ENCODE measurements at regions of chr11 and their contacts with region 1.

Region 1: GRCh38 chr11:110077831-110078325 is 15.3 kb upstream of the ZC3H12C start:
- DNase-seq: peak; percentile 86
- ATAC-seq: peak; percentile 88
- H3K4me3 ChIP-seq: no peak overlapping the region
- H3K27ac ChIP-seq: peak overlapping the region; percentile 51
- H3K4me1 ChIP-seq: peaks cover 16% of the 10 kb centered on the region
- H3K27me3 ChIP-seq: no peaks in the 10 kb centered on the region
- CTCF ChIP-seq: no peak
- EP300 ChIP-seq: peak; percentile 84 to 91
- POLR2A ChIP-seq: no peak
- RAD21 ChIP-seq: no peak; the same call in 1 of the 2 replicates

Region 2: DNA sequence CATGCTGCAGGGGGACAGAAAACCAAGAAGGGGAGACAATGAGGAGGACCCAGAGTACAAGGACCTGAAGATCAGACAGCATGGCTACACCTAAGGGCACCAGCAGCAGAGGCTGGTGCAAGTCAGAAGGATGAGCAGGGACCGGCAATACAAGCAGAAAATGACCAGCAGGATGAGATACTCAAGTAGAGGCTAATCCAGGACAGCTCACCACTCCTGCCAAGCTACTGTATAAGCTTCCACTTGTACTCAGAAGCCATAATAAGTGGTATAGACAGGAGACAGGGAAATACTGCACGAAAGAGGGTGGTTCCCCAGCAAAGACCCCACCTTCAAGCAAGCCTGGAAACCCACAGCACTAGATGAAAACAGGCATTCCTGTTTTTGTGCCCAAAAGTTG is 123.3 kb before region 1 on chr11:
- CTCF ChIA-PET with region 1: interaction called, 10 read pairs
- POLR2A ChIA-PET with region 1: interaction called, 3 read pairs
- RAD21 ChIA-PET with region 1: interaction called, 16 read pairs
- SMC1A ChIA-PET with region 1: interaction called, 14 read pairs
- in situ Hi-C with region 1: loop called (anchors 5 kb)
- intact Hi-C with region 1: loop called (anchors 5 kb)
- DNase-seq: no peak
- ATAC-seq: no peak
- H3K4me3 ChIP-seq: no peak overlapping the region
- H3K27ac ChIP-seq: no peak overlapping the region
- H3K4me1 ChIP-seq: peaks cover 34% of the 10 kb centered on the region
- H3K27me3 ChIP-seq: no peaks in the 10 kb centered on the region
- CTCF ChIP-seq: no peak
- EP300 ChIP-seq: no peak
- POLR2A ChIP-seq: no peak
- RAD21 ChIP-seq: no peak

Region 3: GRCh38 chr11:109984634-109985289 is 93.1 kb before region 1 on chr11:
- CTCF ChIA-PET with region 1: interaction called, 3 read pairs
- POLR2A ChIA-PET with region 1: interaction called, 5 read pairs
- RAD21 ChIA-PET with region 1: interaction called, 3 read pairs
- SMC1A ChIA-PET with region 1: interaction called, 12 read pairs
- in situ Hi-C with region 1: no loop called
- intact Hi-C with region 1: no loop called
- DNase-seq: peak; percentile 67
- ATAC-seq: peak; percentile 94
- H3K4me3 ChIP-seq: peak overlapping the region; percentile 30
- H3K27ac ChIP-seq: peak overlapping the region; percentile 89
- H3K4me1 ChIP-seq: peaks cover 19% of the 10 kb centered on the region
- H3K27me3 ChIP-seq: no peaks in the 10 kb centered on the region; a peak in 1 of 4 replicates
- CTCF ChIP-seq: no peak
- EP300 ChIP-seq: peak; percentile 94 to 95
- POLR2A ChIP-seq: no peak
- RAD21 ChIP-seq: no peak

Region 4: DNA sequence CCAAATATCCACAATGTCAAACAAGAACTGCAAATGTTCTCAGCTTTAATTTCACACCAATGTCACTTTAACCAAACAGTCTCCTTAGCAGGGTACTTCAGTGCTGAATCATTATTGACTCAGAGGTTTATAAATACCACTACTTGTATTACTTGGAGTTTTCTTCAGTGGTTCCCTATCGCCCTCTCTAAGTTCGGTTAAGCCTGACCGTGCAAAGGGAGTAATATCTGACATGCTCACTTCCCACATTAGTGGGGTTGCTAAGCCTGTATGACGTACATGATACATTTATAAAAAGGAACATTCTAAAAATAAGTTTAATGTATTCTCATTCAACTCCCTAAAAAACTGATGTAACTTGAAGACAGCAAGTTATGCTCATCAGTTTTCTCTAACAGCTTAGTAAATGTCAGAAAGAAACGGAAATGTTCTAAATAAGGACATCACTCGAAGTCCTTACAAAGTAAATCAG is 77.8 kb before region 1 on chr11:
- CTCF ChIA-PET with region 1: interaction called, 7 read pairs
- POLR2A ChIA-PET with region 1: interaction called, 13 read pairs
- RAD21 ChIA-PET with region 1: interaction called, 24 read pairs
- SMC1A ChIA-PET with region 1: interaction called, 9 read pairs
- in situ Hi-C with region 1: no loop called
- intact Hi-C with region 1: no loop called
- DNase-seq: peak; percentile 92
- ATAC-seq: peak; percentile 96
- H3K4me3 ChIP-seq: no peak overlapping the region
- H3K27ac ChIP-seq: peak overlapping the region; percentile 62; the same call in 1 of the 2 replicates
- H3K4me1 ChIP-seq: peaks cover 19% of the 10 kb centered on the region
- H3K27me3 ChIP-seq: no peaks in the 10 kb centered on the region
- CTCF ChIP-seq: no peak
- EP300 ChIP-seq: peak; percentile 100
- POLR2A ChIP-seq: no peak
- RAD21 ChIP-seq: peak; percentile 43; the same call in 1 of the 2 replicates

Region 5: GRCh38 chr11:110061296-110061695 is 16.6 kb before region 1 on chr11:
- CTCF ChIA-PET with region 1: interaction called, 4 read pairs
- POLR2A ChIA-PET with region 1: interaction called, 5 read pairs
- RAD21 ChIA-PET with region 1: interaction called, 5 read pairs
- SMC1A ChIA-PET with region 1: interaction called, 14 read pairs
- in situ Hi-C with region 1: no loop called
- intact Hi-C with region 1: no loop called
- DNase-seq: no peak
- ATAC-seq: no peak
- H3K4me3 ChIP-seq: no peak overlapping the region
- H3K27ac ChIP-seq: no peak overlapping the region
- H3K4me1 ChIP-seq: no peaks in the 10 kb centered on the region
- H3K27me3 ChIP-seq: no peaks in the 10 kb centered on the region
- CTCF ChIP-seq: no peak
- EP300 ChIP-seq: no peak
- POLR2A ChIP-seq: no peak
- RAD21 ChIP-seq: no peak

Region 6: GRCh38 chr11:110092515-110093404 is 14.9 kb after region 1 on chr11 and contains the start of gene ZC3H12C:
- CTCF ChIA-PET with region 1: interaction called, 22 read pairs
- POLR2A ChIA-PET with region 1: interaction called, 28 read pairs
- RAD21 ChIA-PET with region 1: interaction called, 52 read pairs
- SMC1A ChIA-PET with region 1: interaction called, 42 read pairs
- in situ Hi-C with region 1: no loop called
- intact Hi-C with region 1: no loop called
- DNase-seq: no peak
- ATAC-seq: peak; percentile 60
- H3K4me3 ChIP-seq: peak within 1 kb of the TSS; percentile 72
- H3K27ac ChIP-seq: peak within 1 kb of the TSS; percentile 75
- H3K4me1 ChIP-seq: peaks cover 21% of the 10 kb centered on the region
- H3K27me3 ChIP-seq: no peaks in the 10 kb centered on the region
- CTCF ChIP-seq: peak; percentile 19 to 44 (median 40); a peak in 5 of 6 replicates
- EP300 ChIP-seq: peak; percentile 58 to 63; a peak in 2 of 4 replicates
- POLR2A ChIP-seq: peak; percentile 80
- RAD21 ChIP-seq: peak; percentile 49
- polyA plus RNA-seq, gene ZC3H12C: 0.31 to 0.68 TPM

Region 7: GRCh38 chr11:110272919-110273318 is 195.0 kb after region 1 on chr11:
- CTCF ChIA-PET with region 1: no interaction called
- POLR2A ChIA-PET with region 1: no interaction called
- RAD21 ChIA-PET with region 1: no interaction called
- SMC1A ChIA-PET with region 1: no interaction called
- in situ Hi-C with region 1: no loop called
- intact Hi-C with region 1: no loop called
- DNase-seq: no peak
- ATAC-seq: no peak
- H3K4me3 ChIP-seq: no peak overlapping the region
- H3K27ac ChIP-seq: no peak overlapping the region
- H3K4me1 ChIP-seq: no peaks in the 10 kb centered on the region
- H3K27me3 ChIP-seq: no peaks in the 10 kb centered on the region
- CTCF ChIP-seq: no peak
- EP300 ChIP-seq: no peak
- POLR2A ChIP-seq: no peak
- RAD21 ChIP-seq: no peak

Measured in GM12878 (cell line).